Activated CD4-positive, alpha-beta T cell treated with anti-CD3 and anti-CD28 coated beads for 36 hours (primary cell): ENCODE measurements at regions of chr9 and their contacts with region 1.

Region 1: DNA sequence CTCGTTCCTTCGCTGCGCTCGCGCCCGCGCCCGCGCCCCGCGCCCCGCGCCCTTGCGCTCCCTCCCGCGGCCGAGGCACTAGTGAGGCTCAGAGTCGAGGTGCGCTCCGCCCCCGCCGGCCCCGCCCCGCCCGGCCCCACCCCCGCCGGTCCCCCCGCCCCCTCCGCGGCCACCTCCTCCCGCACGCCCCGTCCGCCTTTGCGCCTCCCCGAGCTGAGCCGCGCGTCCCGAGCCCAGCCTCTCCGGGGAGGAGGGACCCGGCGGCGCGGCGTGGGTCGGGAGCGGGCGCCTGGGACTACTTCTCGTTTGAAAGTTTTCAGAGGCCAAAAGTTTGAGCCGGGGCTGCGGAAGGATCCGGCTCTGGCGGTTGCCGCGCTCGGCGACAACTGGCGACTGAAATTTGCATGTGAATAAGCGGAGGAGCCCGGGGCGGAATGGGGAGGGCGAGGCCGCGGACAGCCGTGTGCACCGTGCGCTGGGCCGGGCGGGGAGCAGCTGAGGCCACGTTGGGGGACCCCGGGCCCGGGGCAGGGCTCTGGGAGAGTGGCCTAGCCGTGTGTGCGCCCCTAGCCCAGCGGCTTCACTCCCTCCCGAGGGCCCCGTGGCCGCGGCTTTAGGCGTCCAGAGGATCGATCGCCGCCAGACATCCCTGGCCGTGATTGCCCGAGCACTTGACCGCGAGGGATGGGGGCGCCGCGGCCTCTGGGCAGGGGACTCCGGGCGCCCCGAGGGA is at the start of gene NOTCH1:
- DNase-seq: peak; percentile 95
- ATAC-seq: peak; percentile 75
- H3K4me3 Mint-ChIP-seq: peak within 1 kb of the TSS; percentile 92
- H3K27ac Mint-ChIP-seq: peak within 1 kb of the TSS; percentile 88
- H3K4me1 Mint-ChIP-seq: peaks cover 34% of the 10 kb centered on the region
- H3K27me3 Mint-ChIP-seq: no peaks in the 10 kb centered on the region
- total RNA-seq, gene NOTCH1: 70.0 to 79.4 TPM

Region 2: DNA sequence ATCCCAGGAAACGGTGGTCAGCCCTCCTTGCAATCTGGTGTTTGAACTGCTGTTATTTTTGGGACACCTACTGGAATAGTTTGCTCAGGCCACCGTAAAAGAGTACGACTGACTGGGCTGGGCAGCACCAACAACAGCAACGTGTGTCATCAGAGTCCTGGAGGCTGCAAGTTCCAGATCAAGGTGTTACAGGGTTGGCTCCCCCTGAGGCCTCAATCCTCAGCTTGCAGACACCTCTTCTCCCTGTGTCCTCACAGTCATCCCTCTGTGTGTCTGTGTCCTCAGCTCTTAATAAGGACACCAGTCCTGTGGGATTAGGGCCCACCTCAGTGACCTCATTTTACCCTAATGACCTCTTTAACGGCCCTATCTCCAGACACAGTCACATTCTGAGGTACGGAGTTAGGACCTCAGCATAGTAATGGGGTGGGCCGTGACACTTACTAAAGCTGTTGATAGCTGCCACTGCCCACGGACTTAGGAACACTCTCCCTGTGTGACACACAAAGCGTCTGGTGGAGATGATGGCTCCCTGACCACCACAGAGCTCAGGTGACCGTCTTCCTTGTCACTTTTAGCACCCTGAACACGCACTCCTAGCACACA is 923.6 kb before region 1 on chr9:
- CTCF ChIA-PET with region 1: no interaction called
- POLR2A ChIA-PET with region 1: no interaction called
- intact Hi-C with region 1: no loop called
- DNase-seq: no peak
- ATAC-seq: no peak
- H3K4me3 Mint-ChIP-seq: no peak overlapping the region
- H3K27ac Mint-ChIP-seq: no peak overlapping the region
- H3K4me1 Mint-ChIP-seq: no peaks in the 10 kb centered on the region
- H3K27me3 Mint-ChIP-seq: peaks cover 13% of the 10 kb centered on the region

Region 3: DNA sequence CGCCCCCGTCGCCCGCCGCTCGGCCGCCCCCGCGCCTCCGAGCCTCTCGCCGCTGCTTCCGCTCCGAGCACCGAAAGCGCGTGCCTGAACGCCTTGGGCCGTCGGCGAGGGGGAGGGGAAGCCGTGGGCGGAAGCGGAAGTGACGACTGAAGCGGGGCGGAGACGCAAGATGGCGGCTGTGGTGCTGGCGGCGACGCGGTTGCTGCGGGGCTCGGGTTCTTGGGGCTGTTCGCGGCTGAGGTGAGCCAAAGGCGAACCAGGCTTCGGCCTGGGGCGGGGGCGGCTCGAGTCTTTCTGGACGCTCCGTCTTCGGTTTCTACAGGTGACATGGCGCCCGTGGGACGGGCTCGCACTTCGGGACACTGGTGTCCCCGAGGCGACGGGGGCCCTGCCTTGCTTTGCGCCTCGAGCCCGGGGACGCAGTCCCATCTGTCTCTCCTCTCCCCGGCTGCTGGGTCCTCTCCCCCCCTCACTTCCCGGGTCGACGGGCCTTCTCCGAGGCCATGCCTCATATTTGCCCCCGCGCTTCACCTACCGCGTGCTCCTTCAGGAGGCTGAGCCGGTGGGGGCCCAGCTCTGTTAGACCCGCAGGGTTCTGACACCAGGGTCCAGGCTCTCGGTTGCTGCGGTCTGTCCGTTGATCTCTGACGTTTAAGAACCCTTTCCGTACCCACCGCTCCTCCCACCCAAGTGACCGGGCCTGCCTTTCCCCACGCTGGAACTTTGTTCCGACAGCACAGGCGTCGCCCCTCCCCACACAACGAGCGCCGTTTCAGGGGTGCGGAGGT is 135.4 kb before region 1 on chr9 and contains the starts of genes ENTR1 and PMPCA:
- CTCF ChIA-PET with region 1: no interaction called
- POLR2A ChIA-PET with region 1: no interaction called
- intact Hi-C with region 1: loop called in 1 of 2 experiments (anchors 1 kb)
- DNase-seq: peak; percentile 98
- ATAC-seq: peak; percentile 75
- H3K4me3 Mint-ChIP-seq: peak within 1 kb of the TSS; percentile 90
- H3K27ac Mint-ChIP-seq: peak within 1 kb of the TSS; percentile 94
- H3K4me1 Mint-ChIP-seq: peaks cover 49% of the 10 kb centered on the region
- H3K27me3 Mint-ChIP-seq: no peaks in the 10 kb centered on the region
- total RNA-seq, gene ENTR1: 57.2 to 67.7 TPM
- total RNA-seq, gene PMPCA: 88.0 to 113 TPM

Region 4: DNA sequence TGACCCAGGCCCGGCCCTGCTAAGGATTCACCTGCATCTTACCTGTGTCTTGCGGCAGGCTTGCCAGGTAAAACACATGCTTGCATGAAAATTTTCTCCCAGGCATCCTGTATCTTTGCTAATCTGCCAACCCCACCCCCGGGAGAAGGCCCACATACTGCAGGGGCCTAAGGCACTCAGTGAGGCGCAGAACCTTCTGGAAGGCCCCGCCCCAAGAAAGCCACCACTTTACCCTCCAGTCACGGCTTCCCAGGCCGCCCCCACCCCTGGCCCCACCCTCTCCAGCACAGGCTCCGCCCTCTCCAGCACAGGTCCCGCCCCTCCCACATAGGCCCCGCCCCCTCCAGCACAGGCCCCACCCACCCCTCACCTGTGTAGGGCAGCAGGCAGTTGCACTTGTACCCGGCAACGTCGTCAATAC is 33.5 kb before region 1 on chr9:
- CTCF ChIA-PET with region 1: no interaction called
- POLR2A ChIA-PET with region 1: no interaction called
- intact Hi-C with region 1: loop called in 1 of 2 experiments (anchors 1 kb)
- DNase-seq: peak; percentile 72
- ATAC-seq: peak; percentile 86
- H3K4me3 Mint-ChIP-seq: no peak overlapping the region
- H3K27ac Mint-ChIP-seq: no peak overlapping the region
- H3K4me1 Mint-ChIP-seq: no peaks in the 10 kb centered on the region
- H3K27me3 Mint-ChIP-seq: no peaks in the 10 kb centered on the region

Region 5: DNA sequence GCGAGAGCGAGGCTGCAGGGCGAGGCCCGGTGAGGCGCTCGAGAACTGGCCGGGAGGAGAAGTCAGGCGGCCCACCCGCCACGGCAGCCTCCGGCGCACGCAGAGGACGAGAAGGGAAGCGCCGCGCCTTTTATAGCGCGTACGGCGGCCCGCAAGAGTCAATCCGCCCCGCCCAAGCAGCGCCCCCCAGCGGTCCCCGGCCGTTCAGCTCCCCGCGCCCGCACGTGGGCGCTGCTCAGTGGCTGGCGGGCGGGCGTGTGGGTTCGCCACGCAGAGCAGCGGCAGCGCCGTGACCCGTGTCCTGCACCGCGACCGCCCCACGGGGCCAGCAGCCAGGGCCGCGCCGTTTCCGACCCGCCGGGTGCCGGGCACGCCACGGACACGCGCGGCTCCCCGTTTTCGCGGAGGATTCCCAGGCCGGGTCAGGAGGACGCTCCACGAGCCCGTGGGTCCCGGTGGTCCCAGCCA is 182.0 kb after region 1 on chr9:
- CTCF ChIA-PET with region 1: interaction called, 3 read pairs
- POLR2A ChIA-PET with region 1: no interaction called
- intact Hi-C with region 1: loop called in 1 of 2 experiments (anchors 1 kb)
- DNase-seq: peak; percentile 95
- ATAC-seq: peak; percentile 72
- H3K4me3 Mint-ChIP-seq: peak overlapping the region; percentile 100
- H3K27ac Mint-ChIP-seq: no peak overlapping the region
- H3K4me1 Mint-ChIP-seq: peaks cover 39% of the 10 kb centered on the region
- H3K27me3 Mint-ChIP-seq: no peaks in the 10 kb centered on the region

Region 6: GRCh38 chr9:137459147-137459600 is 913.0 kb after region 1 on chr9 and contains the start of gene NSMF:
- CTCF ChIA-PET with region 1: no interaction called
- POLR2A ChIA-PET with region 1: no interaction called
- intact Hi-C with region 1: loop called in 1 of 2 experiments (anchors 5 kb)
- DNase-seq: peak; percentile 98
- ATAC-seq: peak; percentile 66
- H3K4me3 Mint-ChIP-seq: peak within 1 kb of the TSS; percentile 39
- H3K27ac Mint-ChIP-seq: peak within 1 kb of the TSS; percentile 78
- H3K4me1 Mint-ChIP-seq: peaks cover 33% of the 10 kb centered on the region
- H3K27me3 Mint-ChIP-seq: no peaks in the 10 kb centered on the region
- total RNA-seq, gene NSMF: 63.6 to 65.0 TPM